MCF 10A (cell line): ENCODE measurements at regions of chr12 and their contacts with region 1.

Region 1: DNA sequence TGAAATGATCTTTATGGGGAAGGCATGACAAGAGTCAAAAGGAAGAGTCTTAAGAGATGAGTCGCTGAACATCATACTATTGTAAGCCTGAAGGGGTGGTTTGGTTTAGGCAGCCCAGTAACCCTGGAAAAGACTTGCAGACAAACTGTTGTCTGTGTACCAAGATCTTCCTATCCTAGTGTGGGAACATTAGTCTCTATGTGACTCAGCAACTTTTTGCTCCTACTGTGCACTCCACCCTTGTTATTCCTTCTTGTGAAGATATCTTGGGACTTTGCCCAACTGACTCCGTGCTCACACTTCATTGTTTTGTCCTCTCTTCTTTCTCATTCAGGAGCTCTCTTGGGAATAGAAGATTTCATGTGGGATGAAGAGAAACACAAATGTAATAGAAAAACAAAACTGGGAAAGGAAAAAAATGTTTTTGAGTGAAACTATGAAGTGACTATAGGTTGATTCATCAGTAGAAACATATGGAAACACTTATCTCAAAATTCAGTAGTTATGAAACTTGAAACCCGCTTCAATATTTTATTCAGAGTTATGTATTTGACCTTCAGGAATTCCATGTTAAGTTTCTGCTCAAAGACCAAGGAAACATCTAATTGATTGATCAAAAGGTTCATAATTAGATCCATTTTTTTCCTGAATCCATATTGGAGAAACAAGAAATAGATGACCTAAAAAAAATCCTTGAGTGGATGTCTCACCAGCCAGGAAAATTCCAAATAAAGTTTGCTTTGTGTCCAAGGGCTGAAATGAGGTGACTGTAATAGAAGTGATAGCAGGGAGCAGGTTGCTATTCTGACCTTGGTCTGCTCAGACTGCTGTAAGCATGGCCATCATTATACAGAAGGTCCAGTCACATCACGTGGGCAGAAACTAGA is 67.2 kb downstream of the BTG1 start:
- DNase-seq: peak; percentile 96
- H3K4me3 Mint-ChIP-seq: peak overlapping the region; percentile 26
- H3K27ac Mint-ChIP-seq: peak overlapping the region; percentile 95
- H3K4me1 Mint-ChIP-seq: peaks cover 60% of the 10 kb centered on the region
- H3K27me3 Mint-ChIP-seq: no peaks in the 10 kb centered on the region
- CTCF ChIP-seq: no peak

Region 2: GRCh38 chr12:92028441-92028709 is 50.0 kb before region 1 on chr12:
- CTCF ChIA-PET with region 1: no interaction called
- POLR2A ChIA-PET with region 1: interaction called, 15 read pairs
- intact Hi-C with region 1: loop called (anchors 2 kb)
- DNase-seq: peak; percentile 85
- H3K4me3 Mint-ChIP-seq: no peak overlapping the region
- H3K27ac Mint-ChIP-seq: peak overlapping the region; percentile 65
- H3K4me1 Mint-ChIP-seq: peaks cover 49% of the 10 kb centered on the region
- H3K27me3 Mint-ChIP-seq: no peaks in the 10 kb centered on the region
- CTCF ChIP-seq: no peak